Tibial artery (tissue), 4 donors: ENCODE measurements at regions of chr7 and their contacts with region 1.

Region 1: GRCh38 chr7:134098072-134098471 is 29.1 kb upstream of the LRGUK start:
- DNase-seq: no peak
- H3K4me3 ChIP-seq: no peak overlapping the region
- H3K27ac ChIP-seq: no peak overlapping the region
- H3K4me1 ChIP-seq: no peaks in the 10 kb centered on the region
- H3K27me3 ChIP-seq: no peaks in the 10 kb centered on the region
- CTCF ChIP-seq: no peak

Region 2: GRCh38 chr7:133564484-133564883 is 533.6 kb before region 1 on chr7:
- intact Hi-C with region 1: no loop called
- DNase-seq: no peak
- H3K4me3 ChIP-seq: no peak overlapping the region
- H3K27ac ChIP-seq: no peak overlapping the region
- H3K4me1 ChIP-seq: no peaks in the 10 kb centered on the region
- H3K27me3 ChIP-seq: no peaks in the 10 kb centered on the region
- CTCF ChIP-seq: no peak

Region 3: GRCh38 chr7:134113655-134114054 is 15.6 kb after region 1 on chr7:
- intact Hi-C with region 1: loop called (anchors 2 kb)
- DNase-seq: no peak
- H3K4me3 ChIP-seq: no peak overlapping the region
- H3K27ac ChIP-seq: no peak overlapping the region
- H3K4me1 ChIP-seq: no peaks in the 10 kb centered on the region
- H3K27me3 ChIP-seq: no peaks in the 10 kb centered on the region
- CTCF ChIP-seq: no peak